IMR-90 (cell line): ENCODE measurements at regions of chrX and their contacts with region 1.

Region 1: DNA sequence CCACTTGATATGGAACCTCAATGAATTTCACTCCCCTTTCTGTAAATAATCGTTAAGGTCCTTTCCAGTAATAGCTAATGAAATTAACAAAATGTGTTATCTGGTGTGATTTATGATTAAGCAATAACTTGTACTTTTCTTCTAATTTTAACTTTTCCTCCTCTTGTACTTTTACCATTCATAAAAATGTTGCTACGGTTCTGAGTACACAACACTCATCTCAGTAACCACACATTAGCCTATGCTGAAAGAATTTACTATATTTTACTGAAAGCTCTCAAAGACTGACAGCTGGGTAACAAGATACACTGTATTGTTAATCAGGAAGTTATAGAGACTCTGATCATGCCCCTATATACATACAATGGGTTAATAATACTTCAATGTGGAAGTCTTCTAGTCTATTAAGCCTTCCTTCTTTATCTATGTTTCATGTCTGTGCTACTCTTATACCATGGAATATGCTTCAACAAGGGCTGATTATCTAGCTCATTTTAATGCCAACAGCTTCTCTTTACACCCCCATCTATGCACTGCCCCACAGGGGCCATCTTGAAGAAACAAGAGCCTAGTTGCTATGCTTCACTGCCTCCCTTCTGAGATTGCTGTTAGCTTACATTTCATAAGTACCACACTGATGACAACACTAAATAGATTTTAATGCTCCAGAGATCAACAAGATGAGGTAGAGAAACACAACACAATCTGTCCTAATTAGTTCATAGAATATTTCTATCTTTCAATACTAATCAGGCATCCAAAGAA is 39.1 kb downstream of the LAMP2 start:
- DNase-seq: no peak
- ATAC-seq: no peak
- H3K4me3 ChIP-seq: no peak overlapping the region
- H3K27ac ChIP-seq: no peak overlapping the region
- H3K4me1 ChIP-seq: peaks cover 1% of the 10 kb centered on the region; the same call in 1 of the 2 replicates
- H3K27me3 ChIP-seq: no peaks in the 10 kb centered on the region
- CTCF ChIP-seq: no peak
- POLR2A ChIP-seq: no peak
- RAD21 ChIP-seq: no peak

Region 2: GRCh38 chrX:120331116-120331515 is 98.8 kb before region 1 on chrX:
- CTCF ChIA-PET with region 1: no interaction called
- POLR2A ChIA-PET with region 1: no interaction called
- dilution Hi-C with region 1: no loop called
- in situ Hi-C with region 1: no loop called
- intact Hi-C with region 1: no loop called
- DNase-seq: no peak
- ATAC-seq: no peak
- H3K4me3 ChIP-seq: no peak overlapping the region
- H3K27ac ChIP-seq: no peak overlapping the region
- H3K4me1 ChIP-seq: no peaks in the 10 kb centered on the region
- H3K27me3 ChIP-seq: no peaks in the 10 kb centered on the region
- CTCF ChIP-seq: no peak
- POLR2A ChIP-seq: no peak
- RAD21 ChIP-seq: no peak

Region 3: GRCh38 chrX:120406638-120407037 is 23.3 kb before region 1 on chrX:
- CTCF ChIA-PET with region 1: no interaction called
- POLR2A ChIA-PET with region 1: no interaction called
- dilution Hi-C with region 1: no loop called
- in situ Hi-C with region 1: no loop called
- intact Hi-C with region 1: loop called (anchors 1 kb)
- DNase-seq: no peak
- ATAC-seq: no peak
- H3K4me3 ChIP-seq: no peak overlapping the region
- H3K27ac ChIP-seq: no peak overlapping the region
- H3K4me1 ChIP-seq: no peaks in the 10 kb centered on the region
- H3K27me3 ChIP-seq: no peaks in the 10 kb centered on the region
- CTCF ChIP-seq: no peak
- POLR2A ChIP-seq: no peak
- RAD21 ChIP-seq: no peak